B cell (primary cell): ENCODE measurements at regions of chr18 and their contacts with region 1.

Region 1: GRCh38 chr18:23231340-23232021 is 96.2 kb downstream of the CABLES1 start:
- DNase-seq: peak; percentile 96
- ATAC-seq: peak; percentile 76
- H3K4me3 ChIP-seq: peak overlapping the region in 3 of 5 experiments; percentile 4 to 14 (median 5)
- H3K4me3 Mint-ChIP-seq: peak overlapping the region; percentile 82
- H3K27ac ChIP-seq: peak overlapping the region; percentile 71 to 78
- H3K27ac Mint-ChIP-seq: peak overlapping the region; percentile 97
- H3K4me1 ChIP-seq: peaks cover 41 to 47% of the 10 kb centered on the region in 2 donors
- H3K4me1 Mint-ChIP-seq: peaks cover 66% of the 10 kb centered on the region
- H3K27me3 ChIP-seq: peaks cover 0 to 12% (median 0%) of the 10 kb centered on the region in 4 experiments
- H3K27me3 Mint-ChIP-seq: no peaks in the 10 kb centered on the region
- CTCF ChIP-seq: no peak

Region 2: DNA sequence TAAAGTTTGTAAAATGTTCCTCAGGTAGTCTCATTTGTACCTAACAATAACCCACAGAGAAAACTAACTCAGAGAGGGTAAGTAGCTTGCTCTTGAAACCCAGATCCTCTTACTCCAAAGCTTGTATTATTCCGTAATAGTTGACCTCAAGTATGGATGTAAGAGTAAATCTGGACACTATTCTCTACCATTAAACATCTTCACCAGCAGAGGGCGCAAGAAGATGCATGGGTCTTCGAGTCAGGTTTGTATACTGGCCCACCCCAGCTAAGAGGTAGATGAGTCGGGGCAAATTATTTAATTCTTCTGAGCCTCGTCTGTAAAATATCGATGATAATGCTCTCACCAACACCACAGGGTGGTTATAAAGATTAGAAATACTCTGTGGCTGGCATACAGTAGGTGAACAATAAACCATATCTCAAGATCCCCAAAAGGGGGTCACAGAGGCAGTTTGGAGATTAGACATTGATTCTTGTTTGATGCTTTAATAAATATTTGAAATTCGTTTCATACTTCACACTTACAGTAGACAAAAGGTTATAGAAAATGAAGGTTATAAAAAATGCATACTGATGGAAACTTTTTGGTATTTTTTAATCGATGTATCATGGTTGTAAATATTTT is 99.7 kb before region 1 on chr18:
- CTCF ChIA-PET with region 1: interaction called, 20 read pairs
- POLR2A ChIA-PET with region 1: interaction called, 6 read pairs
- intact Hi-C with region 1: loop called (anchors 1 kb)
- DNase-seq: peak; percentile 85
- ATAC-seq: no peak
- H3K4me3 ChIP-seq: no peak overlapping the region
- H3K4me3 Mint-ChIP-seq: no peak overlapping the region
- H3K27ac ChIP-seq: no peak overlapping the region
- H3K27ac Mint-ChIP-seq: no peak overlapping the region
- H3K4me1 ChIP-seq: peaks cover 24 to 28% of the 10 kb centered on the region in 2 donors
- H3K4me1 Mint-ChIP-seq: peaks cover 21% of the 10 kb centered on the region
- H3K27me3 ChIP-seq: peaks cover 0 to 33% (median 16%) of the 10 kb centered on the region in 4 experiments
- H3K27me3 Mint-ChIP-seq: peaks cover 16% of the 10 kb centered on the region
- CTCF ChIP-seq: peak; percentile 95

Region 3: DNA sequence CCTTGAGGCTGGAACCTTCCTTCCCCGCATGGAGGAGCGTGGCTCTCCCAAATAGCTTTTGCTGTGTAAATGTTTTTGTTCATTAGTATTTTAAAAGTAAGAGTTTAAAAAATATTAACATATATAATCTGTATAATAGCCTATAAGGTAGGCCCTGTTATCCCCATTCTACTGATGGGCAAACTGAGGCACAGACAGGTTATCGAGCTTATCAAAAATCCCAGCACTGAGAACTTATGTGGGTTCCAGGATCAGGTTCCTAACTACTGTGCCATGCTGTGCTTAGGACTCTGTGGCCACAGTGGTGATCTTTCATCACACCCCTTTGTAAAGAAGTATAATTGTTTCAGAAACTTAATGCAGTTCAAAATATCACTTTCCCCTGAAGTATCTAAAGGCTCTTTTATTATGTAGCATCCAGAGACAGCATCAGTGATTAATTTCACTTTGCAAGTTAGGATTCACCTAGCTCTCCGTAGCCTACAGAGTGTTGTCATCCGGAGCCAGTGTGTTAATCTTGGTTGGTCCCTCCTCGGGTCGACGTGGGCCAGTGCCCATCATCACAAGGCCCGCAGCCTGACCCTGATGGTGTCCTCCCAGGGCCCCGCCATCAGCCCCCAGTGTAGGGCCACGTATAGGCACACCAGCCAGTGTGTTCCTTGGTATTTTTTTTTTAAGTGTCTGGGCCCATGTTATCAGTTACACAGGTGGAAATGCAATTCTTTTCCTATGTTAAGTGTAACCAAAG is 67.5 kb before region 1 on chr18:
- CTCF ChIA-PET with region 1: no interaction called
- POLR2A ChIA-PET with region 1: interaction called, 13 read pairs
- intact Hi-C with region 1: no loop called
- DNase-seq: no peak
- ATAC-seq: no peak
- H3K4me3 ChIP-seq: no peak overlapping the region
- H3K4me3 Mint-ChIP-seq: no peak overlapping the region
- H3K27ac ChIP-seq: no peak overlapping the region
- H3K27ac Mint-ChIP-seq: no peak overlapping the region
- H3K4me1 ChIP-seq: no peaks in the 10 kb centered on the region
- H3K4me1 Mint-ChIP-seq: no peaks in the 10 kb centered on the region
- H3K27me3 ChIP-seq: no peaks in the 10 kb centered on the region
- H3K27me3 Mint-ChIP-seq: peaks cover 19% of the 10 kb centered on the region
- CTCF ChIP-seq: no peak

Region 4: DNA sequence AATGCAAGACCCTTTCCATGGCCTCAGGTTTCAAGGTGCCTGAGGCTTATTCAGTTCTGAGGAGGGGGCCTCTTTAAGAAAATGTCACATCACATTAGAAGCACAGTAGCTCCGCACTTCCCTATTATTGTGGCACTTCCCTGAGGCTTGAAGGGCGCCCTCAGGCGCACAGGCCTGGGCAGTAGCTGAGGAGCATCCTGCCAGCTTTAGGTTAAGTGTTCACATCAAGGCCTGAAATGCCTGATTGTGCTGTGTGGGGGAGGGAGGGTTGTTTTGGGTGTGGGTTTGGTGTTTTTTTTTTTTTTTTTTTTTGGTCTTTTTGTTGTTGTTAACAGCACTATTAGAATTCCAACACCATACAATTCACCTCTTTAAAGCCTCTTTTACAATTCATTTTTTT is 11.7 kb after region 1 on chr18:
- CTCF ChIA-PET with region 1: interaction called, 12 read pairs
- POLR2A ChIA-PET with region 1: interaction called, 13 read pairs
- intact Hi-C with region 1: loop called (anchors 1 kb)
- DNase-seq: peak; percentile 46
- ATAC-seq: no peak
- H3K4me3 ChIP-seq: no peak overlapping the region
- H3K4me3 Mint-ChIP-seq: no peak overlapping the region
- H3K27ac ChIP-seq: no peak overlapping the region
- H3K27ac Mint-ChIP-seq: no peak overlapping the region
- H3K4me1 ChIP-seq: peaks cover 3 to 8% of the 10 kb centered on the region in 2 donors
- H3K4me1 Mint-ChIP-seq: peaks cover 26% of the 10 kb centered on the region
- H3K27me3 ChIP-seq: no peaks in the 10 kb centered on the region
- H3K27me3 Mint-ChIP-seq: peaks cover 4% of the 10 kb centered on the region
- CTCF ChIP-seq: no peak

Region 5: DNA sequence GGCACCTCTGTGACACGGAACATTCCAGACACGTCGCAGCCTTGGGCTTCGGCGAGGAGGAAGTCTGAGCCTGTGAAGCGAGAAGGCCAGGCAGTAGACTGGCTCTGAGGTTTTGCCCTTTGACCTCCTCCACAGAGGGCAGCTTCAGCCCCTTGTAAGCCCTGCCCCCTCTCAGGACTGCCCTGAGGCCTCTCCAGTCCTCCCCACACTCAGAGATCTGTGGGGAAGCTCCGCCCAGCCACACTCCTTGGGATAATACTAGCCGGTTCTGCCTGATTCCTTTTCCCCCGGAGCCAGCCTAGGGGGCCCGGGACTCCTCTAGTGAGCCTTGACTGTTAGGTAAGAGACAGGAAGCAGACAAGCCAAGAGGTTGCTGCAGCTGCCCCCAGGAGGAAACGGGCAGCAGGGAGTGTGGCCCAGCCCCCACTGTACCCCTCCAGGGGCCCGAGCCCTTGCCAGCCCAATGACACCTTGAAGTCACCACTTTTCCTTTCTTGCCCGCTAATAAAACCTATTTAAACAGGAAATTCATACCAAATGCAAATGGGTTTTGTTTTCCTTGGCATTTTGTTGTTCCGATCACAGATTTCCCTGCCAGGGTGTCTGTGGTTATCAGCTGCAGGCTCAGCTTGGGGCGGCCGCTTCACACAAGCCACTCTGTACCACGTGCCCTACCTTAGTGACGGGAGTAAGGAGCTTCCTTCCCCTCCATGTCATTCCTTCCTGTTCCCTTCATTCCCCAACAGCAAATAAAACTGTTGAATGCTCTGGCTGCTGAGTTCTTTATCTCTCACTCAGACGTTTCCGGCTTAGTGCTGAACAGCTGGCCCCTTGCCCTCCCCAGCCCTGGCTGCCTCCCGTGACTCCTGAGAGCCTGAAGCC is 28.5 kb after region 1 on chr18:
- CTCF ChIA-PET with region 1: interaction called, 3 read pairs
- POLR2A ChIA-PET with region 1: interaction called, 6 read pairs
- intact Hi-C with region 1: loop called (anchors 2 kb)
- DNase-seq: peak; percentile 45
- ATAC-seq: peak; percentile 73
- H3K4me3 ChIP-seq: peak overlapping the region in 4 of 5 experiments; percentile 15 to 41 (median 38)
- H3K4me3 Mint-ChIP-seq: peak overlapping the region; percentile 84
- H3K27ac ChIP-seq: no peak overlapping the region
- H3K27ac Mint-ChIP-seq: peak overlapping the region; percentile 85
- H3K4me1 ChIP-seq: peaks cover 23 to 26% of the 10 kb centered on the region in 2 donors
- H3K4me1 Mint-ChIP-seq: peaks cover 42% of the 10 kb centered on the region
- H3K27me3 ChIP-seq: peaks cover 0 to 13% (median 0%) of the 10 kb centered on the region in 4 experiments
- H3K27me3 Mint-ChIP-seq: peaks cover 3% of the 10 kb centered on the region
- CTCF ChIP-seq: no peak